CD4-positive, alpha-beta memory T cell (primary cell): ENCODE measurements at regions of chr4 and their contacts with region 1.

Region 1: GRCh38 chr4:153750197-153750817 is 9.5 kb downstream of the RNF175 start:
- DNase-seq: peak; percentile 54 to 63 (median 58)
- H3K4me3 ChIP-seq: no peak overlapping the region
- H3K4me3 Mint-ChIP-seq: no peak overlapping the region
- H3K27ac ChIP-seq: no peak overlapping the region
- H3K27ac Mint-ChIP-seq: no peak overlapping the region
- H3K4me1 ChIP-seq: peaks cover 3% of the 10 kb centered on the region
- H3K4me1 Mint-ChIP-seq: peaks cover 0 to 9% (median 2%) of the 10 kb centered on the region in 4 donors
- H3K27me3 ChIP-seq: no peaks in the 10 kb centered on the region
- H3K27me3 Mint-ChIP-seq: peaks cover 0 to 2% of the 10 kb centered on the region in 2 donors

Region 2: DNA sequence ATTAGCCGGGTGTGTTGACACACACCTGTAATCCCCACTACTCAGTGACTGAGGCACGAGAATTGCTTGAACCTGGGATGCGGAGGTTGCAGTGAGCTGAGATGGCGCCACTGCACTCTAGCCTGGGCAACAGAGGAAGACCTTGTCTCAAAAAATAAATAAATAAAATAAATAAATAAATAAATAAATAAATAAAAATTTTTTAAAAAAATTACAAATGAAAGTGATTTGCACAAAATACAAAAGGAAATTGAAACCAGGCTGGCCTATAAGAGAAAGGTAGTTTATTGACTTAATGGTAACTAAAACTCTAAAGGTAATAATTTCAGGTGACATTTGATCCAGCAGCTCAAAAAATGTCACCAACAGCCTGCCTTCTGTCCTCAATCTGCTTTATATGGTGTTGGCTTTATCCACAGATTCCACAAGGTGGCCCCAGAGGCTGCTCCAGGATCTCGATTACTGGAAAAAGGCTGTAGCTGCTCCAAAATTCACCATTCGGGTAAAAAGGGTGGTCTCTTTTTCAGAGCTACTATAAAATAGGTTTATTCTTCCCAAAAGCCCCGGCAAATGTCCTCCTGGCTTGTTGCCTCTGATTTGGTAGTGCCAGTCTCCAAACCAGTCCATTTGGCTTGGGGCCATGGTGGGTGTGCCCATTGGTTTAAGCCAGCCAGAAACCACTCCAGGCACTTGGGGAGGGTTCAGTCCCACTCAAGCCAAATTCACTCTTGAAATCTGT is 607.4 kb before region 1 on chr4:
- CTCF ChIA-PET with region 1: interaction called, 7 read pairs
- POLR2A ChIA-PET with region 1: no interaction called
- intact Hi-C with region 1: loop called (anchors 1 kb)
- DNase-seq: peak; percentile 63 to 68 (median 64)
- H3K4me3 ChIP-seq: no peak overlapping the region
- H3K4me3 Mint-ChIP-seq: no peak overlapping the region
- H3K27ac ChIP-seq: no peak overlapping the region
- H3K27ac Mint-ChIP-seq: no peak overlapping the region
- H3K4me1 ChIP-seq: peaks cover 4% of the 10 kb centered on the region
- H3K4me1 Mint-ChIP-seq: peaks cover 0 to 12% (median 5%) of the 10 kb centered on the region in 4 donors
- H3K27me3 ChIP-seq: no peaks in the 10 kb centered on the region
- H3K27me3 Mint-ChIP-seq: no peaks in the 10 kb centered on the region

Region 3: DNA sequence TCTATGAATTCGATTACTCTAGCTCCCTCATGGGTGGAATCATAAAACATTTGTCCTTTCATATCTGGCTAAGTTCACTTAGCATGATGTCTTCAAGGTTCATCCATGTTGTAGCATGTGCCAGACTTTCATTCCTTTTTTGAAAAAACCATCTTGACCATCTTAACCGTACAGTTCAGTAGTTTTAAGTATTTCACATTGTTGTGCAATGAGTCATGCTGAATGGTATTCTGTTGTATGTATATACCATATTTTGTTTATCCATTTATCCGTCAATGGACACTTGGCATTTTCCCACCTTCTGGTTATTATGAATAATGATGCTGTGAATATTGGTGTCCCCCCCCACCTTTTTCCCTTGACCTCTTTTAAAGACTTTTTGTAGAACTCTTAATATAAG is 138.6 kb before region 1 on chr4:
- CTCF ChIA-PET with region 1: no interaction called
- POLR2A ChIA-PET with region 1: no interaction called
- intact Hi-C with region 1: no loop called
- DNase-seq: no peak
- H3K4me3 ChIP-seq: no peak overlapping the region
- H3K4me3 Mint-ChIP-seq: no peak overlapping the region
- H3K27ac ChIP-seq: no peak overlapping the region
- H3K27ac Mint-ChIP-seq: peak overlapping the region in 2 of 7 donors; percentile 2 to 92
- H3K4me1 ChIP-seq: peaks cover 21% of the 10 kb centered on the region
- H3K4me1 Mint-ChIP-seq: peaks cover 34 to 49% (median 41%) of the 10 kb centered on the region in 4 donors
- H3K27me3 ChIP-seq: no peaks in the 10 kb centered on the region
- H3K27me3 Mint-ChIP-seq: no peaks in the 10 kb centered on the region

Region 4: GRCh38 chr4:153634738-153635353 is 115.5 kb before region 1 on chr4:
- CTCF ChIA-PET with region 1: interaction called, 29 read pairs
- POLR2A ChIA-PET with region 1: no interaction called
- intact Hi-C with region 1: loop called (anchors 1 kb)
- DNase-seq: peak in 4 of 5 donors; percentile 13 to 20 (median 18)
- H3K4me3 ChIP-seq: no peak overlapping the region
- H3K4me3 Mint-ChIP-seq: no peak overlapping the region
- H3K27ac ChIP-seq: no peak overlapping the region
- H3K27ac Mint-ChIP-seq: peak overlapping the region in 3 of 7 donors; percentile 17 to 35 (median 31)
- H3K4me1 ChIP-seq: no peaks in the 10 kb centered on the region
- H3K4me1 Mint-ChIP-seq: peaks cover 0 to 6% (median 0%) of the 10 kb centered on the region in 4 donors
- H3K27me3 ChIP-seq: no peaks in the 10 kb centered on the region
- H3K27me3 Mint-ChIP-seq: no peaks in the 10 kb centered on the region

Region 5: GRCh38 chr4:153643406-153644383 is 106.6 kb before region 1 on chr4:
- CTCF ChIA-PET with region 1: interaction called, 17 read pairs
- POLR2A ChIA-PET with region 1: no interaction called
- intact Hi-C with region 1: loop called (anchors 1 kb)
- DNase-seq: peak in 4 of 5 donors; percentile 54 to 65 (median 62)
- H3K4me3 ChIP-seq: no peak overlapping the region
- H3K4me3 Mint-ChIP-seq: peak overlapping the region in 3 of 8 donors; percentile 8 to 62 (median 35)
- H3K27ac ChIP-seq: no peak overlapping the region
- H3K27ac Mint-ChIP-seq: peak overlapping the region in 3 of 7 donors; percentile 19 to 93 (median 46)
- H3K4me1 ChIP-seq: peaks cover 6% of the 10 kb centered on the region
- H3K4me1 Mint-ChIP-seq: peaks cover 7 to 15% (median 10%) of the 10 kb centered on the region in 4 donors
- H3K27me3 ChIP-seq: no peaks in the 10 kb centered on the region
- H3K27me3 Mint-ChIP-seq: no peaks in the 10 kb centered on the region

Region 6: DNA sequence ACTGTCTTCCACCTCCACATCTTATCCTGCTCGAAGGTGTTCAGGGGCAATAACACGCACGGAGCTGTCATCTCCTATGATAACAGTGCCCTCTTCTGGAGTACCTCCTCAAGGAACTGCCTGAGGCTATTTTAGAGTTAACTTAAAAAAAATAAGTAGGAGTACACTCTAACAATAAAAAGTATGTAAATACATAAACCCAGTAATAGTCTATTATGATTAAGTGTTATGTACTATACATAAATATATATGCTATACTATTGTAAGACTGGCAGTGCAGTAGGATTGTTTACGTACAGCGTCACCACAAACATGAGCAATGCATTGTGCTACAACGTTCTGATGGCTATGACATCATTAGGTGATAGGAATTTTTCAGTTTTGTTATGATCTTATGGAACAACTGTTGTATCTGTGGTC is 100.7 kb before region 1 on chr4:
- CTCF ChIA-PET with region 1: interaction called, 17 read pairs
- POLR2A ChIA-PET with region 1: no interaction called
- intact Hi-C with region 1: no loop called
- DNase-seq: no peak
- H3K4me3 ChIP-seq: no peak overlapping the region
- H3K4me3 Mint-ChIP-seq: no peak overlapping the region
- H3K27ac ChIP-seq: no peak overlapping the region
- H3K27ac Mint-ChIP-seq: no peak overlapping the region
- H3K4me1 ChIP-seq: peaks cover 19% of the 10 kb centered on the region
- H3K4me1 Mint-ChIP-seq: peaks cover 20 to 33% (median 23%) of the 10 kb centered on the region in 4 donors
- H3K27me3 ChIP-seq: no peaks in the 10 kb centered on the region
- H3K27me3 Mint-ChIP-seq: no peaks in the 10 kb centered on the region

Region 7: DNA sequence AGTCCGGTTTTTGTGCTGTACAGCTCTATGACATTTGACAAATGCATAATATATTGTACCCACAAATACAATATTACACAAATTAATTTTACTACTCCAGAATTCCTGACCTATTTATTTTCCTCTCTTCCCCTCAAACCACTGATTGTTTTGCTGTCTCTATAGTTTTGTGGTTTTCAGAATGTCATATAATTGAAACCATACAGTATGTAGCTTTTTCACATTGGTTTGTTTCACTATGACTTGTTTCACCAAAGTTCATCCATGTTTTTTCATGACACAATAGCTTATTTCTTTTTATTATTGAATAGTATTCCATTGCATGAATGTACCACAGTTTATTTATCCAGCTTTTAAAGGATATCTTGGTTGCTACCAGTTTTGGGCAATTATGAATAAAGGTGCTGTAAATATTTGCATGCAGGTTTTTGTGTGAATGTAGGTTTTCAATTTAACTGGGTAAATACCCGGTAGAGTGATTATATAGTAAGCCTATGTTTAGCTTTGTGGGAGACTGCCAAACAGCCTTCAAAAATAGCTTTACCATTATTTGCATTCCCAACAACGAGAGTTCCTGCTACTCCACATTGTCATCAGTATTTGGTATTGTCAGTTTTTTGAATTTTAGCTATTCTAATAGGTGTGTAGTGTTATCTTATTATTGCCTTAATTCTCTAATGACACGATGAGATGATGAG is 16.4 kb before region 1 on chr4:
- CTCF ChIA-PET with region 1: interaction called, 19 read pairs
- POLR2A ChIA-PET with region 1: interaction called, 3 read pairs
- intact Hi-C with region 1: no loop called
- DNase-seq: no peak
- H3K4me3 ChIP-seq: no peak overlapping the region
- H3K4me3 Mint-ChIP-seq: no peak overlapping the region
- H3K27ac ChIP-seq: no peak overlapping the region
- H3K27ac Mint-ChIP-seq: no peak overlapping the region
- H3K4me1 ChIP-seq: no peaks in the 10 kb centered on the region
- H3K4me1 Mint-ChIP-seq: peaks cover 0 to 1% (median 0%) of the 10 kb centered on the region in 4 donors
- H3K27me3 ChIP-seq: no peaks in the 10 kb centered on the region
- H3K27me3 Mint-ChIP-seq: peaks cover 5 to 6% of the 10 kb centered on the region in 2 donors

Region 8: GRCh38 chr4:154073107-154073822 is 323.0 kb after region 1 on chr4:
- CTCF ChIA-PET with region 1: no interaction called
- POLR2A ChIA-PET with region 1: no interaction called
- intact Hi-C with region 1: no loop called
- DNase-seq: no peak
- H3K4me3 ChIP-seq: no peak overlapping the region
- H3K4me3 Mint-ChIP-seq: no peak overlapping the region
- H3K27ac ChIP-seq: no peak overlapping the region
- H3K27ac Mint-ChIP-seq: no peak overlapping the region
- H3K4me1 ChIP-seq: no peaks in the 10 kb centered on the region
- H3K4me1 Mint-ChIP-seq: no peaks in the 10 kb centered on the region
- H3K27me3 ChIP-seq: no peaks in the 10 kb centered on the region
- H3K27me3 Mint-ChIP-seq: peaks cover 1 to 8% of the 10 kb centered on the region in 2 donors